PC-9 (cell line): ENCODE measurements at regions of chr3 and their contacts with region 1.

Region 1: DNA sequence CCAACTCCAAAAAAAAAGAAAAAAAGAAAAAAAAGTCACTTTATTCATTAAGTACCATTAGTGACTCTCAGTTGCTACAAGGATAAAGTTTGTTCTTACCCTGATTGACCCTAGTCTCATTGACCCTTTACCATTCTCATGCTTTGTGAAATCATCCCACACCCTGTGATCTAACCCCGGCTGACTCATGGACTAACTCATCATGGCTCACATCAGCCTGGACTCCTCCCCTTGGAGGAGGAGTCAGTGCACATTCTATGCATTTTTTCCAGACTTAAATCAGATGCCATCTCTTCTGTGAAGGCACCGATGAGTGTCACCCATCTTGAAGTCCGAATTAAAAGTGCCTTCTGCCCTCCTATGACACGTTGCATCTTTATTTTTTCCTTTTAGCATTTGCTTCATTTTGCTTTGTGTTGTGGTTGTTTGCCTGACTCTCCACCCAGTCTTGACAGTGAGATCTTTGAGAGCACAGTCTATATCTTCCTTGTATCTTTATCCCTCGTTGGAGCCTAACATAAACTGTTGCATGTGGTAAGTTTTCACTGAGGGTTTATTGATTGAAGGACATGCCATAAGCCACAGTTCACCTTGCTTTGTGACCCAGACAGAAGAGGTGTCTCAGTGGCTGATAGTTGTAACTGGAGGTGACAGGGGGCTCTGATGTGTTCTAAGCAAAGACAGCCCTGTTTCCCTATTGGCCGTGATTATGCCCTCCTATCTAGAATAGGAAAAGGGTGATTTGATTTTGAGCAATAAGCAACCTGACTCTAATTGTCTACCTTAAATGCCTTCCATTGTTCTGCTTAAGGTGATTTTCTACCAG is 72.1 kb downstream of the IL1RAP start:
- DNase-seq: peak; percentile 80 to 86
- H3K4me3 ChIP-seq: no peak overlapping the region
- H3K27ac ChIP-seq: peak overlapping the region; percentile 57
- H3K4me1 ChIP-seq: peaks cover 22% of the 10 kb centered on the region
- H3K27me3 ChIP-seq: no peaks in the 10 kb centered on the region
- CTCF ChIP-seq: no peak

Region 2: DNA sequence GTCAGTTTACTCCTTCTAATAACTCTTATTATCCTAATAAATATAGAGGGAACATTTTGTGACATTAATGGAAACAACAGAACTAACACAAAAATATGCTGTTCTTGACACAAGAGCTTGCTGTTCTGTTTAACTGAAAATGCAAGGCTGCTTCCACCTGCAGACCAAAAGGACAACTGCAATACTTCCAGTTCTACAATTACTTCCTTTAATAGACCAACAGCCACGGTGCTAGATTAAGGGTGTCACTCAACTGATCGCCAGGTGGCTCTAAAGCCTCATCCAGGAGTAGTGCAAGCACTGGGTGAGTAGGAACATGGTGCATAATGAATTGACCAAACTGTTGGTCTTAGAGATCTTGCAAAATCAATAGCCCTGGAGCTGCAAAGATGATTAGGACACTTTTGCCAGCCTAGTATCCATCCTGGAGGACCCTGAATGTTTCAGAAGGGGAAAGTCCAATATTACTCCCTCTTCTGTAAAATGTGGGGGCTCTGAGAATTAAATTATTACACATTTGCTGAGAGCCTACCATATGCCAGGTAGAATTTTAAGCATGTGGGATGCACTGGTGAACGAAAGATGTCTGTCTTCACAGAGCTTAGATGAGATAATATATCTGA is 201.7 kb before region 1 on chr3:
- CTCF ChIA-PET with region 1: no interaction called
- POLR2A ChIA-PET with region 1: no interaction called
- intact Hi-C with region 1: no loop called
- DNase-seq: peak; percentile 64 to 67
- H3K4me3 ChIP-seq: no peak overlapping the region
- H3K27ac ChIP-seq: peak overlapping the region; percentile 96
- H3K4me1 ChIP-seq: peaks cover 52% of the 10 kb centered on the region
- H3K27me3 ChIP-seq: no peaks in the 10 kb centered on the region
- CTCF ChIP-seq: peak; percentile 49; the same call in 1 of the 2 replicates

Region 3: DNA sequence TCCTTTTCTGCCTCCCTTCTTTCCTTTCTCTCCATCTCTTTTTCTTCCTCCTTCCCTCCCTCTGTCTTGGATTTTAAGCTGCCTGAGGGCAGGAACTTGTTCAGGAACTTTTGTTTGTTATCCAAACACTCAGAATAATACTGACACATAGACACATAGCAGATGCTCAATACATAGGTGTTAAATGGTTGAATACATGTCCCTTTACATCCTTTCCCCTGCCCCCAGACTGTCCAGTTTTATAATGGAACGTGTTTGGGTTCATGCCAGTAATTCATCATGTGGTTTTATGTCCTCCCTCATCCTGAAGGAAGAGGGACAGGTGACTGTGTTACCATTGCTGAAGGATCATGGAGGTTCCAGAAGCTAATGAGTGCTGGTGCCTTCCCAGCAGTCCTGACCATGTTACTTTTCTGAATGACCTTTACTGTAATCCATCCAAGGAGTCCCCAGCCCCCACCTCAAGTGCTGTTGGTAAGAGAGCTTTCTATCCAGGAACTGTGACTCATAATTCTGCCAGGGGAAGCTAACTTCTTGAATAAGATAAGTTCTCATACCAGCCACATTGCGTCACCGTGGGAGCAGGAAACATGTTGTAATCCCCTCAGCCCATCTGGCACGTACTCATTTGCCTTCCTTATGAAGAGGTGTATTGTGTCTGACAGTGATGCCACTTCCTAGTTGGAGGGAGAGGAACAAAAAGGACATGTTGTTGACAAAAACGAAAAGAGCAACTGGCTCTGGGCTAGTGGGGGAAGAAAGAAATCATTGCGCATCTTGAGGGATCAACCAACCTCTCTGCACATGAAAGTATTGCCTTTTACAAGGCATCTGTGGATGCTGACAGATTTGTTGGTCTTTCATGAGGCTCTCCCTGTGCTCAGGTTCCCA is 19.7 kb before region 1 on chr3:
- CTCF ChIA-PET with region 1: no interaction called
- POLR2A ChIA-PET with region 1: interaction called, 6 read pairs
- intact Hi-C with region 1: loop called (anchors 1 kb)
- DNase-seq: peak; percentile 94 to 100
- H3K4me3 ChIP-seq: no peak overlapping the region
- H3K27ac ChIP-seq: peak overlapping the region; percentile 82
- H3K4me1 ChIP-seq: peaks cover 33% of the 10 kb centered on the region
- H3K27me3 ChIP-seq: no peaks in the 10 kb centered on the region
- CTCF ChIP-seq: no peak

Region 4: DNA sequence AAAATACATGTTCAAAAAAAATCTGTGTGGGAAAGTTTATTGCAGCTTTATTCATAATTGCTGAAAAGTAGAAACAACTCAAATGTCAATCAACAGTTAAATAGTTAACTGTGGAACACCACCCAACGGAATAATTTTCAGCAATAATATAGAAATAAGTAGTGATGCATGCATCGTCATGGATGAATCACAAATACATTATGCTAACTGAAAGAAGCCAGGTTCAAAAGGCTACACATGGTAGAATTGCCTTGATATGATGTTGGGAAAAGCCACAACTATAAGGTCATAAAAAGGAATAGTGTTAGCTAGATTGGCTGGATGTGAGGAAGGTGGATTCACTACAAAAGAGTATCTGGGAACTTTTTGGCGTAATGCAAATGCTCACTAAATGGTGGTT is 194.5 kb after region 1 on chr3:
- CTCF ChIA-PET with region 1: no interaction called
- POLR2A ChIA-PET with region 1: no interaction called
- intact Hi-C with region 1: no loop called
- DNase-seq: no peak
- H3K4me3 ChIP-seq: no peak overlapping the region
- H3K27ac ChIP-seq: no peak overlapping the region
- H3K4me1 ChIP-seq: no peaks in the 10 kb centered on the region
- H3K27me3 ChIP-seq: no peaks in the 10 kb centered on the region
- CTCF ChIP-seq: no peak